ENCODE measurements at regions of chr1 and their contacts with region 1.

Region 1: GRCh38 chr1:41416552-41417334 is 55.5 kb downstream of the FOXO6 start:
- DNase-seq: peak; percentile 74
- ATAC-seq: peak; percentile 72
- H3K4me3 ChIP-seq: no peak overlapping the region
- H3K4me3 Mint-ChIP-seq: no peak overlapping the region
- H3K27ac ChIP-seq: no peak overlapping the region
- H3K27ac Mint-ChIP-seq: no peak overlapping the region
- H3K4me1 ChIP-seq: no peaks in the 10 kb centered on the region
- H3K4me1 Mint-ChIP-seq: no peaks in the 10 kb centered on the region
- H3K27me3 ChIP-seq: peaks cover 0 to 8% (median 0%) of the 10 kb centered on the region in 4 experiments
- H3K27me3 Mint-ChIP-seq: peaks cover 11% of the 10 kb centered on the region
- CTCF ChIP-seq: peak; percentile 89

Region 2: GRCh38 chr1:41268154-41268770 is 148.5 kb before region 1 on chr1:
- CTCF ChIA-PET with region 1: interaction called, 21 read pairs
- POLR2A ChIA-PET with region 1: no interaction called
- intact Hi-C with region 1: no loop called
- DNase-seq: peak; percentile 71
- ATAC-seq: peak; percentile 72
- H3K4me3 ChIP-seq: no peak overlapping the region
- H3K4me3 Mint-ChIP-seq: no peak overlapping the region
- H3K27ac ChIP-seq: no peak overlapping the region
- H3K27ac Mint-ChIP-seq: no peak overlapping the region
- H3K4me1 ChIP-seq: peaks cover 3 to 4% of the 10 kb centered on the region in 2 donors
- H3K4me1 Mint-ChIP-seq: peaks cover 2% of the 10 kb centered on the region
- H3K27me3 ChIP-seq: peaks cover 0 to 4% (median 0%) of the 10 kb centered on the region in 4 experiments
- H3K27me3 Mint-ChIP-seq: peaks cover 3% of the 10 kb centered on the region
- CTCF ChIP-seq: peak; percentile 99

Region 3: DNA sequence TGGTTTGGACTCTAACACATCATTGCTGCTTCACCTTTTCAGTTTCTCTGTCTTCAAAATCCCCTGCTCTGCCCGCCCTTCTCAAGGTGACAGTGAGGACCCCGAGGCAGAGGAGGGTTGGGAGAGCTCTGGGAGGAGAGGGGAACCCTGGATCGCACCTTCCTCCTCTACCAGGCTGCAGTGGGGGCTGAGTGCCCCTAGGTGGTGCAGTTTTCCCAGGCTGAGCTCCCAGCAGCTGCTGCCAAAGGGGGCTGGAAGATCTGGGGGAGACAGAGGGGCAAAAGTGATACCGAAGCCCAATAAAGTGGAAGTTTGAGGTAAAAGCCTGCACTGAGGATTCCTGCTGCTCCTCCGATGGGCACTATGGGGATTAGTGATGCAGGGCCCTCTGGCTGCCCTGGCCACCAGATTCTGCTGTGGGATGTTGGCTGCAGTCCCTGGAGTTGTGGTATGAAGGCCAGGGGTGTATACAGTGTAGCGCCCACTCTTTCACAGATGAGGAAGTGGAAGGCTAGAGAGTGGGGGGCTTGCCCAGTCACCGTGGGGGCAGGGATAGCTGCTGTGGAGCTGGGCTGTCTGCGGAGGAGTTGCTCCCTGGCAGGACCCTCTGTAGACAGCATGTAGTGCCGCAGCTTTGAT is 133.9 kb before region 1 on chr1:
- CTCF ChIA-PET with region 1: interaction called, 73 read pairs
- POLR2A ChIA-PET with region 1: no interaction called
- intact Hi-C with region 1: loop called (anchors 1 kb)
- DNase-seq: peak; percentile 36
- ATAC-seq: peak; percentile 36
- H3K4me3 ChIP-seq: no peak overlapping the region
- H3K4me3 Mint-ChIP-seq: no peak overlapping the region
- H3K27ac ChIP-seq: no peak overlapping the region
- H3K27ac Mint-ChIP-seq: no peak overlapping the region
- H3K4me1 ChIP-seq: no peaks in the 10 kb centered on the region
- H3K4me1 Mint-ChIP-seq: no peaks in the 10 kb centered on the region
- H3K27me3 ChIP-seq: peaks cover 0 to 5% (median 2%) of the 10 kb centered on the region in 4 experiments
- H3K27me3 Mint-ChIP-seq: peaks cover 39% of the 10 kb centered on the region
- CTCF ChIP-seq: peak; percentile 74

Region 4: DNA sequence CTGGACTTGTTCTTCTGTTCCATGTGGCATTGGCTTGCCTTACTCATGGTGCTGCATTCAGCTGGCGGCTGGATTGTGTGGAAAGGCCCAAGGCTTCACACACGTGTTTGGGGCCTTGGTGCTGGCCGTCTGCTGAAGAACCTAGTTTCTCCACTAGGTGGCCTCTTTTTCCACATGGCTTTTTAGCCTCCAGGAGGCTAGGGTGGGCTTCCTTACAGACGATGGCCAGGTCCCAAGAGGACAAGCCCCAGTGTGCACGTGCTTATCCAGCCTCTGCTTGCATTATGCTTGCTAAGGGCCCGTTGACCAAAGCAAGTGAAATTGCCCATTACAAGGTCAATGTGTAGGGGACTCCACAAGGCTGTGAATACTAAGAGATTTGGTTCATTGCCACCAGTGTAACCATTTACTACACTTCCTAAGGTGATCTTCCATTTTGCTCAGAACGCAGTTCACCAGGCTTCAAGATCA is 103.0 kb before region 1 on chr1:
- CTCF ChIA-PET with region 1: interaction called, 9 read pairs
- POLR2A ChIA-PET with region 1: no interaction called
- intact Hi-C with region 1: loop called (anchors 5 kb)
- DNase-seq: peak; percentile 29
- ATAC-seq: no peak
- H3K4me3 ChIP-seq: no peak overlapping the region
- H3K4me3 Mint-ChIP-seq: no peak overlapping the region
- H3K27ac ChIP-seq: no peak overlapping the region
- H3K27ac Mint-ChIP-seq: no peak overlapping the region
- H3K4me1 ChIP-seq: no peaks in the 10 kb centered on the region
- H3K4me1 Mint-ChIP-seq: no peaks in the 10 kb centered on the region
- H3K27me3 ChIP-seq: no peaks in the 10 kb centered on the region
- H3K27me3 Mint-ChIP-seq: peaks cover 12% of the 10 kb centered on the region
- CTCF ChIP-seq: peak; percentile 60

Region 5: DNA sequence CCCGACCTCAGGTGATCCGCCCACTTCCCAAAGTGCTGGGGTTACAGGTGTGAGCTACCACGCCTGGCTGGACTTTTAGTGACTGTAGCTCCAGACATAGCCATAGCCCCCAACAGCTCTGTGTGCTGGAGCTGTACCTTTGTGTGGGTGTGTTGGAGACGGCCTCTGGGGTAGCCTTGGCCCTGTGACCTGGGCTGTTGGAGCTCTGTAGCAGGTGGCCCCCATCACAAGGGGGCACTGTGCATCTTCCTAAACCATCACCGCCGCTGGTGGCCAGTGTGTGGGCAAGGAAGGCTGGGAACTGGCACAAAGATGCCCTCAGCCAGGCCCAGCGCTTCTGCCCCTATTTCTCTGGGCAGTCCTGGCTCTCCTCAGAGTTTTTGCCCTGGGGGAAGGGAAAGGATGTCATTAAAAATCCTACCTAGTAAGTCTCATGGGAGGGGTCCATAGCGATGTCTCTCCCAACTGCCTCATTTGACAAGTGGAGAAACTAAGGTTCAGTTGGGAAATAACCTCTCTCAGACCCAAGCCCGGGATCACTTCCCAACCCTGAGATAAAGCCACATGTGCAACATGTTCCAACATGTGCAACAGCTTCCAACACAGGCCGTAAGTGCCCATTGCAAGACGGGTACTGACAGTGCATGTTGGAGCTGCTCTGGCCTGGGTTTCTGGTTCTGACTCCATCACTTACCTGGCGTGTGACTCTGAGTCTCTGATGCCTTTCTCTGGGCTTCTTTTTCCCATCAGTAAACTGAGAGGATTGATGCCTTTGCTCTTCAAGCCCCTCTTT is 93.7 kb before region 1 on chr1:
- CTCF ChIA-PET with region 1: interaction called, 30 read pairs
- POLR2A ChIA-PET with region 1: no interaction called
- intact Hi-C with region 1: loop called (anchors 1 kb)
- DNase-seq: peak; percentile 28
- ATAC-seq: no peak
- H3K4me3 ChIP-seq: no peak overlapping the region
- H3K4me3 Mint-ChIP-seq: no peak overlapping the region
- H3K27ac ChIP-seq: no peak overlapping the region
- H3K27ac Mint-ChIP-seq: no peak overlapping the region
- H3K4me1 ChIP-seq: no peaks in the 10 kb centered on the region
- H3K4me1 Mint-ChIP-seq: no peaks in the 10 kb centered on the region
- H3K27me3 ChIP-seq: no peaks in the 10 kb centered on the region
- H3K27me3 Mint-ChIP-seq: peaks cover 7% of the 10 kb centered on the region
- CTCF ChIP-seq: no peak

Region 6: GRCh38 chr1:42006836-42007235 is 590.1 kb after region 1 on chr1:
- CTCF ChIA-PET with region 1: no interaction called
- POLR2A ChIA-PET with region 1: no interaction called
- intact Hi-C with region 1: no loop called
- DNase-seq: no peak
- ATAC-seq: no peak
- H3K4me3 ChIP-seq: no peak overlapping the region
- H3K4me3 Mint-ChIP-seq: no peak overlapping the region
- H3K27ac ChIP-seq: no peak overlapping the region
- H3K27ac Mint-ChIP-seq: no peak overlapping the region
- H3K4me1 ChIP-seq: no peaks in the 10 kb centered on the region
- H3K4me1 Mint-ChIP-seq: no peaks in the 10 kb centered on the region
- H3K27me3 ChIP-seq: no peaks in the 10 kb centered on the region
- H3K27me3 Mint-ChIP-seq: peaks cover 10% of the 10 kb centered on the region
- CTCF ChIP-seq: no peak

Measured in B cell (primary cell).